Posterior vena cava (tissue), 2 donors: ENCODE measurements at regions of chr1 and their contacts with region 1.

Region 1: GRCh38 chr1:54199765-54200518 is at the starts of genes CYB5RL and MRPL37:
- DNase-seq: peak; percentile 95
- total RNA-seq, gene CYB5RL: 5.0 to 6.7 TPM
- total RNA-seq, gene MRPL37: 40.9 to 41.9 TPM

Region 2: DNA sequence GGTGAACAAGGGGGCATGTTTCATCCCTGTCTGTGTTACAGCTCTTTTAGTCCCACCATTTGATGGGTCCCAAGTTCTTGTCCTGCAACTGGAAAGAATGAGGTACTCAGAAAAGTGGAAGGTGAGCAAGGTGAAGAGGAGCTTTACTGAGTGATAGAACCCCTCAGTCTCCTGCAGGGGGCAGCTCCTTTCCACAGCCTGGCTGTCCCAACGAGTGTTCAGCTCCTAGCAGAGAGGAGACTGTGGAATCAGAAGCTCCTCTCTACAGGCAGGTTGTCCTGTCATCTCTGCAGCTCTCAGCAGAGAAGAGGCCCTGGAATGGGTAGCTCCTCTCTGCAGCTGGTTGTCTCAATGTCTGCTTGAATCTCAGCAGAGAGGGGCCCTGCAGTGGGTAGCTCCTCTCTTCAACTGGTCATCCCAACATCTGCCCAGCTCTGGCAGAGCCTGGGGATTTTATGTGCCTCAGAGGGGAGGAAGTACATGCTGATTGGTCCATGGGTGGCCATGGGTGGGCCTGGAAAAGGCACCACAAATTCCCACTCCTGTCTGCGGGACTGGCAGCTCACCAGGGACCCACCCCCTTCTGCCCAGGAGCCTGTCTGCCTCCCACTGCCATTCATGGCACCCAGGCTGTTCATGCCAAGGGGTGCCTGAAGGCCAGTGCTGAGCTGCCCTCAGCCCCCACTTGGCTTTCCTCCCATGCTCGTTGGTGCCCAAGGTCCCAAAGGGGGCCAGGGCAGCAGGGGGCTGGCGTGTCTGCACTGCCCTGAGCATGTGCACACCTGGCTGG is 207.7 kb before region 1 on chr1:
- intact Hi-C with region 1: no loop called
- DNase-seq: no peak

Region 3: GRCh38 chr1:54121482-54122134 is 78.3 kb before region 1 on chr1:
- intact Hi-C with region 1: loop called in 1 of 2 experiments (anchors 10 kb)
- DNase-seq: peak; percentile 92

Region 4: DNA sequence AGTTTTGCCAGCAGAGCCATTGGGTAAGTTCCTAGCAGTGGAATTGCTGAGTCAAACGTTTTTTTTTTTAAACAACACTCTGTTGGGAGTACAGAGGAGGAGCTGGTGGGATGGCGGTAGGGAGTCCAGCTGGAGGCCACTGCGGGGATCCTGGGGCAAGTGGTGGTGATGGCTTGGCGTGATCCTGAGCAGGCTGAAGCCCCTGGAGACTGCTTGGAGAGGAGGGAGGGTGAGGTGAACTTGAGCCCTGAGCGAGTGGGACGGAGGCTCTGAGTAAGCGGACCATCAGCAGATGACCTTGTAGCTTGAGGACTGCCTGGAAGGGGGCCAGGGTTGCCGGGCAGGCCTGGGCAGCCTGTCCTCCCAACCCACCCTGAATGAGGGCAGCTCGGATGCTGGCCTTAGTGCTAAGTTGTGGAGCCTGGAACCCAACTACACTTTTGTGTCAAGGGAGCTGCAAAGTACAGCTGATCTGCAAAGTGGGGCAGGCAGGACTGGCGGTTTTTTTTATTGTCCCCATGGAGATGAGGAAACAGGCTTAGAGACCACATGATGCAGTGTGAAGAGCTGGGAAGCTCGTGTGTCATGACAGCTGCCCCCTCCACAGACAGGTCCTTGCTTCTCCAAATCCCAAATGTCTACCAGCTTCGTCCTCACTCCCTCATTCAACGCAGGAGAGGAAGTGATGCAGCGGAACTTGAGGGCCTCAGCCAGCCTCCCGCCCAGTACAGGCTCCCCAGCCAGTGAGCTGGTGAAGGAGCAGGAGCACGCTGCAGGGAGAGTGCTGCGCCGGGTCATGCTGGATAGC is 20.3 kb after region 1 on chr1:
- intact Hi-C with region 1: no loop called
- DNase-seq: peak; percentile 92

Region 5: GRCh38 chr1:54249819-54250435 is 50.0 kb after region 1 on chr1:
- intact Hi-C with region 1: loop called in 1 of 2 experiments (anchors 1 kb)
- DNase-seq: no peak